Spleen (tissue), 13 donors: ENCODE measurements at regions of chr10 and their contacts with region 1.

Region 1: DNA sequence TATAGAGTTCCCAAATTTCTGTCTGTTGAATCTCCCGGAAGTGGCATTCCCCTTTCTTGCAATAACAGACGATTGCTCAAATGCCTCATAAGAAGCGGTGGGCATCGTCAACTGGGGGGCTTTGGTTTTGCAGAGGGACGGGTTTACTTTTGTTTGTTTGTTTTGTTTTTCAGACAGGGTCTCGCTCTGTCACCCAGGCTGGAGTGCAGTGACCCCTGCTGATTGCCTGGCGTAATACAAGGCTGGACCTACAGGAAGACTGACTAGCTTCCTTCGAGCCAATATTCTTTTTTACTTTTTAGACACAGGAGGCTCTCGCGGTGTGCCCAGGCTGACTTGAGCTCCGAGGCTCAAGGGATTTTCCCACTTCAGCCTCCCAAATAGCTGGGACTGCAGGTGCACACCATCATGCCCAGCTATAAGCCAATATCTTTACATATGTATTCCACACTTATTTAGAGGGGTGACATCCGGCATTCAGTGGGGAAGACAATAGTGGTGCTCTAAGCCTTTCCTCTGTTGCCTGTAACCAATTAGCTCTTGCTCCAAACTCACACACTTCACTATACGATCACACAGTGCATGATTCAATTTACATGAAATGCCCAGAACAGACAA is 58.1 kb downstream of the FHIP2A start:
- DNase-seq: no peak
- H3K4me3 ChIP-seq: no peak overlapping the region
- H3K27ac ChIP-seq: no peak overlapping the region
- H3K4me1 ChIP-seq: peaks cover 0 to 40% (median 17%) of the 10 kb centered on the region in 6 donors
- H3K27me3 ChIP-seq: peaks cover 0 to 28% (median 0%) of the 10 kb centered on the region in 7 donors
- CTCF ChIP-seq: peak in 9 of 11 experiments; percentile 12 to 63 (median 52)
- POLR2A ChIP-seq: no peak

Region 2: GRCh38 chr10:114917927-114918672 is 38.5 kb after region 1 on chr10:
- intact Hi-C with region 1: no loop called
- DNase-seq: no peak
- H3K4me3 ChIP-seq: no peak overlapping the region
- H3K27ac ChIP-seq: no peak overlapping the region
- H3K4me1 ChIP-seq: no peaks in the 10 kb centered on the region
- H3K27me3 ChIP-seq: peaks cover 0 to 4% (median 0%) of the 10 kb centered on the region in 7 donors
- CTCF ChIP-seq: no peak
- POLR2A ChIP-seq: no peak

Region 3: DNA sequence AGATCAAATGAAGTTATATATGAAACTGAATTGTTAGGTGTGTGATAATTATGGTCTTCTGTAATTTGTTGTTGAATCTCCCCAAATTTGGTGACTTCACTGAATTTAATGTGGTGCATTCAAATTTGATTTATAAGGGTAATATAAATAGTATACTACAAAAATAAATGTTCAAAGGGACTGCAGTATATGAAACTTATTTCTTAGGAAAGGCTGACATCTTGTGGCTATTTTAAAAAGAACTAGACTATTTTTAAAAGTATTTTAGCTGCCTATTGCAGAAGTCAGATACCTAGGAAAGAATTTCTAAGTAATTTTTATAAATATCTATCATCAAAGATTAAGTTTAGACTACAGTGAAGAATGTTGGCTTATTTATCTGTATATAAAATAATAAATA is 250.1 kb after region 1 on chr10:
- intact Hi-C with region 1: loop called (anchors 5 kb)
- DNase-seq: no peak
- H3K4me3 ChIP-seq: no peak overlapping the region
- H3K27ac ChIP-seq: no peak overlapping the region
- H3K4me1 ChIP-seq: no peaks in the 10 kb centered on the region
- H3K27me3 ChIP-seq: no peaks in the 10 kb centered on the region
- CTCF ChIP-seq: peak in 4 of 11 experiments; percentile 13 to 35 (median 28)
- POLR2A ChIP-seq: no peak